Posterior cingulate gyrus (tissue), 11 donors: ENCODE measurements at regions of chr16 and their contacts with region 1.

Region 1: DNA sequence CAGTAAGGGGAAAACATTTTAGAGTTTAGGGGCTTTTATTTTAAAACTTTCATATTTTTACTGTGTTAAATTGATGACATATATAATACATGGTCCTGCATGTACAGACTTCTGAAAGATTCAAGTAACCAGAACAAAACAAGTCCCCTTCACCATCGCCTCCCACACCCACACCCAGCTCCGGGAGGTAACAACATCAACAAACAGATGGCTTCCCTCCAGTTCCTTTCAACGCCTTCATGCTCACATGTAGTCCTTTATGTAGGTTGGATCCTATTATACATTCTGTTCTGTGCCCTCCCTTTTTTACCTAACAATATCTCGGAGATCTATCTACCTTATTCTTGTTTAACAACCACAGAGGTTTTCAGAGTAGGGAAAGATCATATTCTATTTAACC is 30.5 kb downstream of the GINS3 start:
- DNase-seq: no peak

Region 2: DNA sequence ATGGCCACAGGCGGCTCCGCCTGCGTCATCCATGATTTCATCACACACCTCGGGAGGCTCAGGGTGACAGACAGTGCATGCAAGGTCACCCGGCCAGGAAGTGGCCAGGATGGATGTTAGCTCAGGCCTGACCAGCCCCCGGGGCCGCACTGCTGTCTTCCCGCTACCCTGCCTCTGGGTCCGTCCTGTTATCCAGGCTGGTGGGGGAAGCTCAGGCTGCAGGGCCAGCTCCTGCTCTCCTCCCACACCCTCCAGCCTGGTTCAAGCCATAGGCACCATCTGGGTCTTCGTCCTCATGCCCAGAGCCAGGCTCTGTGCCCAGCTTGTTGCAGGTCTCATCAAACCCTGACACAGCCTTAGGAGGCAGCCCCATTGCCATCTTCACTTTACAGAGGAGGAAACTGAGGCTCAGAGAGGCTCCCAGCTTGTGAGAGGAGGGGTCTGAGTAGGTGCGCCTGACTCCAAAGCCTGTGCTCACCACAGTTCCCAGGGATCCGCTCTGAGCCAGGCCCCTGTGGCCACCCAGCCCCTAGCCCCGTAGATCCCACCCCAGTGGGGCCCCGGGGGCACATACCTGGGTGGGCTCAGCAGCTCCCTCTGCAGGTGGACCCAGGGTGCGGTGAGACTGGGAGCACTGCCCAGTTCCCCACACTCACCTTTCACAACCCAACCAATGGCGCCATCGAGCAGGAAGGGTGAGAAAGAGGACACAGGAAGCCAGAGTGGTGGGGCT is 755.1 kb before region 1 on chr16:
- intact Hi-C with region 1: no loop called
- DNase-seq: peak in 1 of 10 donors; percentile 70

Region 3: DNA sequence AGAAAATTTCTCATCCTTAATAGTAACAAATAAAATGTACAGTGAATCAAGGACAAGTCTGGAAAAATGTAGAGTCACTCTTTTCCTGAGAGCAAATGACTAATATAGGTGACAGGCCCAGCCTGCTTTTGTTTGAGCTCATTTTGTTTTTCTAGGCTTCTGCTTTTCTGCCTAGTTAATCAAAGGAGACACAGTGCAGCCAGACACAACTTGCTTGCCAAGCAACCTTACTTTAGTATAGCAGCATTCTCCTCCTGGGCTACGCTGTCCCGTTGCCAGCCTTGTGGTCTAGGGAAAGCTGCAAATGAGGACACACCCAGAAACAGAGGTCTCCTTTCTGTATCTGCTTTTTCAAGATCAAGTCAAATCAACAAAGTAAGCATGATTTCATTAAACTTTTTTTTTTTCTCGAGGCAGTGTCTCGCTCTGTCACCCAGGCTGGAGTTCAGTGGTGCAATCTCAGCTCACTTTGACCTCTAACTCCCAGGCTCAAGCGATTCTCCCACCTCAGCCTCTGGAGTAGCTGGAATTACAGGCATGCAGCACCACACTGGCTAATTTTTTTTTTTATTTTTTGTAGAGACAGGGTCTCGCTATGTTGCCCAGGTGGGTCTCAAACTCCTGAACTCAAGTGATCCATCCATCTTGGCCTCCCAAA is 13.4 kb before region 1 on chr16:
- intact Hi-C with region 1: loop called (anchors 1 kb)
- DNase-seq: peak in 2 of 10 donors; percentile 23 to 34

Region 4: GRCh38 chr16:58435779-58436178 is 13.0 kb after region 1 on chr16:
- intact Hi-C with region 1: no loop called
- DNase-seq: no peak